Esophagus muscularis mucosa (tissue), 4 donors: ENCODE measurements at regions of chr10 and their contacts with region 1.

Region 1: DNA sequence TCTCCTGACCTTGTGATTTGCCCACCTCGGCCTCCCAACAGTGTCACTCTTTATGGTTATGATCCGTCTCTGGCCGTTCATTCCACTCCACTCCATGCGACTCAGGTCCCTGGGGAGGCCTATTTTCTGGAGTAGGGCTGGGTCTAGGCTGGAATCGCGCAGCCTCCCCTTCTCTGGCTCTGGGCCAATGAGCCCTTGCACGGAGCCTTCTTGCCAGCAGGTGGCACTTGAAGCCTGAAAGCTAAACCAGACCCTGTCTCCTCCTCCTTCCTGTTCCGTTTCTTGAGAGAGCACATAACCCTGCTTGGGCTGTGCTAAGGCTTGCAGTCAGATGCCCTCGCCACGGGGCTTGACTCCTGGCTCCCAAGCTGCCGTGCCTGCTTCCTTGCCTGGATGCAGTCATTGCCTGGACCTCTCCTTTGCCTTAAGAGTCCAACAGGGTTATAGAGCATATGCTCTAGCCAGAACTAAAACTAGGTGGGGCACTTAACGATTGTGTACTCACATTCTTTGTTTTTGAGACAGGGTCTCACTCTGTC is 9.6 kb upstream of the DNAJB12 start:
- DNase-seq: peak; percentile 95
- H3K4me3 ChIP-seq: peak overlapping the region; percentile 23 to 44 (median 29)
- H3K27ac ChIP-seq: peak overlapping the region; percentile 37 to 56 (median 48)
- H3K4me1 ChIP-seq: peaks cover 10 to 13% (median 11%) of the 10 kb centered on the region in 4 donors
- H3K27me3 ChIP-seq: no peaks in the 10 kb centered on the region
- CTCF ChIP-seq: peak; percentile 94 to 95 (median 95)
- EP300 ChIP-seq: no peak
- POLR2A ChIP-seq: no peak

Region 2: GRCh38 chr10:72503241-72503640 is 138.9 kb after region 1 on chr10:
- intact Hi-C with region 1: no loop called
- DNase-seq: no peak
- H3K4me3 ChIP-seq: no peak overlapping the region
- H3K27ac ChIP-seq: peak overlapping the region in 1 of 4 donors; percentile 23
- H3K4me1 ChIP-seq: peaks cover 0 to 11% (median 6%) of the 10 kb centered on the region in 4 donors
- H3K27me3 ChIP-seq: no peaks in the 10 kb centered on the region
- CTCF ChIP-seq: no peak
- EP300 ChIP-seq: no peak
- POLR2A ChIP-seq: no peak

Region 3: GRCh38 chr10:72692057-72692910 is 328.0 kb after region 1 on chr10 and contains the start of gene MCU:
- intact Hi-C with region 1: loop called (anchors 10 kb)
- DNase-seq: peak; percentile 98
- H3K4me3 ChIP-seq: peak within 1 kb of the TSS; percentile 83 to 88 (median 86)
- H3K27ac ChIP-seq: peak within 1 kb of the TSS; percentile 90 to 96 (median 94)
- H3K4me1 ChIP-seq: peaks cover 24 to 39% (median 36%) of the 10 kb centered on the region in 4 donors
- H3K27me3 ChIP-seq: no peaks in the 10 kb centered on the region
- CTCF ChIP-seq: peak in 1 of 3 experiments; percentile 8
- EP300 ChIP-seq: no peak
- POLR2A ChIP-seq: no peak
- total RNA-seq, gene MCU: 14.9 to 20.6 (median 19.5) TPM

Region 4: DNA sequence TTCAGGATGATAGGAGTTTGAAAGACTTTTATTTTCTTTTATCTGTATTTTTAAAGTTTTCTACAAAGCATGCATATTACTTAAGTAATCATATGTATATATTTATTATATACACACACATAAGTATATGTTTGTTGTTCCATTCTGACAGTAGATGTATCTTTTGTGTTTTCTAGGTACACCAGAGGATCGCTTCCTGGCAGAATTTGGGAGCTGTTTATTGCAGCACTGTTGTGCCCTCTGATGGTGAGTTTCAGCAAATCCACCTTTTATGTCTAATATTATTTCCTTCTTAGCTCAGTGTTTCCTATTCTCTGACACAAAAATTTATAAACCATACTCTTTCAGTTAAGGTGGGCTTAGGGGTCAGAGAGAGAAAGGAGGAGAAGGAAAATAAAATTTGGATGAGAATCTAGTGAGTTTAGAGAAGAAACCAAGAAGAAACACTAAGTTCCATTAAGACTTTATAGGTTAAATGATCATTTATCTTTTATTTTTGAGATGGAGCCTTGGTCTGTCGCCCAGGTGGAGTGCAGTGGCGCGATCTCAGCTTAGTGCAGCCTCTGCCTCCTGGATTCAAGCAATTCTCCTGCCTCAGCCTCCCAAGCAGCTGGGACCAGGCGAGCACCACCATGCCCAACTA is 470.0 kb after region 1 on chr10:
- intact Hi-C with region 1: loop called (anchors 5 kb)
- DNase-seq: no peak
- H3K4me3 ChIP-seq: no peak overlapping the region
- H3K27ac ChIP-seq: no peak overlapping the region
- H3K4me1 ChIP-seq: peaks cover 10 to 30% (median 23%) of the 10 kb centered on the region in 4 donors
- H3K27me3 ChIP-seq: no peaks in the 10 kb centered on the region
- CTCF ChIP-seq: peak; percentile 63 to 81 (median 65)
- EP300 ChIP-seq: no peak
- POLR2A ChIP-seq: no peak